Mucosa of descending colon (tissue), 3 donors: ENCODE measurements at regions of chr10 and their contacts with region 1.

Region 1: GRCh38 chr10:132223156-132223590 is 36.4 kb downstream of the DPYSL4 start:
- DNase-seq: peak; percentile 74 to 90 (median 85)
- ATAC-seq: peak; percentile 97
- H3K4me3 ChIP-seq: no peak overlapping the region
- H3K4me1 ChIP-seq: peaks cover 3% of the 10 kb centered on the region
- CTCF ChIP-seq: peak; percentile 88

Region 2: GRCh38 chr10:132359305-132360040 is 136.3 kb after region 1 on chr10:
- intact Hi-C with region 1: loop called (anchors 5 to 10 kb)
- DNase-seq: peak in 1 of 3 donors; percentile 32
- ATAC-seq: no peak
- H3K4me3 ChIP-seq: no peak overlapping the region
- H3K4me1 ChIP-seq: no peaks in the 10 kb centered on the region
- CTCF ChIP-seq: no peak

Region 3: DNA sequence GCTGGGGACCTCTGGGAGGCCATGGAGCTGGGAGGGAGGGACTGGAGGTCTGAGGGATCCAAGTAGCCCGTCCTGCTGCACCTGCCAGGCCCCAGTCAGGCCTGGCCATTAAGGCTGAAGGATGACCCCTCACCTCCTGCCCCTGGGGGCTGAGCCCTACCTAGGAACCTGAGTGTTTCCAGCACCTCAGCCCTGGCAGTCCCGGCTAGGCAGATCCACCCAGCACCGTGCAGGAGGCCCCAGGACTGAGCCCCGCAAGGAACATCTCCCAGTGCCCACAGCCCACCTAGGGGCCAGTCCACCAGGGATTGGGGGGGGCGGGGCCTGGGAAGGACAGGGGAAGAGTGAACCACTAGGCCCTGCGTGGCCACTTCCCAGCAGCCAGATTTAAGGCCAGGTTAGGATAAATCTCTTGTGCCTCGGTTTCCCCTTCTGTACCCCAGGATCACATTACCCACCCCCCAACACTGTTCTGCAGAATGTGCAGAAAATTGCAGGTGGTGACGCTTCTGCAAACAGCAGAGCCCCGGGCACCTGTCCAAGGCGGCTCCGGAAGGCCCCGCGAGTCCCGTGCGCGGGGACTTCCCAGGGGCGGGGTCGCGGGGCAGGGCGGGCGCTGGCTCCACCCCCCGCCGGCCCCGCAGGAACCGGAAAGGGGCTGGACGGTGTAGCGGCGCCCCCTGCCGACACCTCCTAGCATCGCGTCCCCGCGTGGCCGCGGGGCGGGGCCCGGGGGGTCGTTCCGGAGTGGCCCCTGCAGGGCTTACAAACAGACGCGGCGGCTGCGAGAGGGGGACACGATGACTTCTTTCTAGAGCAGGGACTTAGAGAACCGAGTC is 229.7 kb after region 1 on chr10:
- intact Hi-C with region 1: loop called in 1 of 2 experiments (anchors 10 kb)
- DNase-seq: peak; percentile 96
- ATAC-seq: peak; percentile 80
- H3K4me3 ChIP-seq: no peak overlapping the region
- H3K4me1 ChIP-seq: peaks cover 48% of the 10 kb centered on the region
- CTCF ChIP-seq: peak; percentile 90